CD8-positive, alpha-beta T cell (primary cell): ENCODE measurements at regions of chr4 and their contacts with region 1.

Region 1: GRCh38 chr4:1628892-1629698 is 55.0 kb downstream of the FAM53A start:
- DNase-seq: peak; percentile 51 to 81 (median 69)
- ATAC-seq: peak; percentile 93
- H3K4me3 ChIP-seq: no peak overlapping the region
- H3K4me3 Mint-ChIP-seq: no peak overlapping the region
- H3K27ac ChIP-seq: no peak overlapping the region
- H3K27ac Mint-ChIP-seq: no peak overlapping the region
- H3K4me1 ChIP-seq: no peaks in the 10 kb centered on the region
- H3K4me1 Mint-ChIP-seq: no peaks in the 10 kb centered on the region
- H3K27me3 ChIP-seq: no peaks in the 10 kb centered on the region
- H3K27me3 Mint-ChIP-seq: no peaks in the 10 kb centered on the region
- CTCF ChIP-seq: peak; percentile 95

Region 2: DNA sequence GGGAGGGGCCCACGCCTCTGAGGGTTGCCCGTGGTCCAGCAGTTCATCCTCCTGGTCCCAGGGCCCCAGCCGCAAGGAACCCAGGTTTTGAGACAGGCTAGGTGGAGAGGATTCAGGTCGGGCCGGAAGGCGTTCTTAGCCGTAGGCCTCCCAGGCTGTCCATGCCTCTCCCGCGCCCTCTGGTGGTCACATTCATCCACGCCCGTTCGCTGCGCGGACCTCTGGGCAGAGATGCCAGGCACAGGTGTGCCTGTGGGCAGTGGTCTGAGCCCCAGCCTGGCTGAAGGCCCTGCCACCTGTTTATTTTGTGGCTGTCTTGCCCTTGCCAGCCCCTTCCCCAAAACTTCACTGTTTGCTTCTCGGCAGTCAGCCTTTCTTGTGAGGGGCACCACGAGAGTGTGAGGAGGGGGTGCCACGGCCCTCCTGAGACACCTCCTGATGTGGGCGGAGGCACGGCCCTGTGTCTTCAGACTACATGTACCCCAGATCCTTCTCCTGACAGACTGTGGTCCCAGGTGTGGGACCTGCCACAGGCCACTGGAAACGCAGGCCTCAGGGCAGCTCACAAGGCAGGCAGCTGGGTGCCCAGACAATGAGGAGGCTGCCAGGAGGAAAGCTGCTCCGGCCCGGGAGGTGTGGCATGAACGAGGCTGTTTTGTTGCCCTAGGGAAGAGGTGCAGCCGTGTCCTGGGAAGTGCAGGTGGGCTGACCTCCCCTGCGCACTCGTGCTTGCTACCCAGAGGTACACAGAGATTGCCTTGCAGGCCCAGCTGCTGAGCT is 277.1 kb before region 1 on chr4:
- CTCF ChIA-PET with region 1: interaction called, 91 read pairs
- POLR2A ChIA-PET with region 1: no interaction called
- intact Hi-C with region 1: loop called in 1 of 2 experiments (anchors 1 kb)
- DNase-seq: peak; percentile 78 to 96 (median 90)
- ATAC-seq: peak; percentile 30
- H3K4me3 ChIP-seq: no peak overlapping the region
- H3K4me3 Mint-ChIP-seq: no peak overlapping the region
- H3K27ac ChIP-seq: peak overlapping the region in 1 of 2 experiments; percentile 28
- H3K27ac Mint-ChIP-seq: peak overlapping the region; percentile 72
- H3K4me1 ChIP-seq: peaks cover 21% of the 10 kb centered on the region
- H3K4me1 Mint-ChIP-seq: peaks cover 33% of the 10 kb centered on the region
- H3K27me3 ChIP-seq: no peaks in the 10 kb centered on the region
- H3K27me3 Mint-ChIP-seq: no peaks in the 10 kb centered on the region
- CTCF ChIP-seq: peak; percentile 85

Region 3: DNA sequence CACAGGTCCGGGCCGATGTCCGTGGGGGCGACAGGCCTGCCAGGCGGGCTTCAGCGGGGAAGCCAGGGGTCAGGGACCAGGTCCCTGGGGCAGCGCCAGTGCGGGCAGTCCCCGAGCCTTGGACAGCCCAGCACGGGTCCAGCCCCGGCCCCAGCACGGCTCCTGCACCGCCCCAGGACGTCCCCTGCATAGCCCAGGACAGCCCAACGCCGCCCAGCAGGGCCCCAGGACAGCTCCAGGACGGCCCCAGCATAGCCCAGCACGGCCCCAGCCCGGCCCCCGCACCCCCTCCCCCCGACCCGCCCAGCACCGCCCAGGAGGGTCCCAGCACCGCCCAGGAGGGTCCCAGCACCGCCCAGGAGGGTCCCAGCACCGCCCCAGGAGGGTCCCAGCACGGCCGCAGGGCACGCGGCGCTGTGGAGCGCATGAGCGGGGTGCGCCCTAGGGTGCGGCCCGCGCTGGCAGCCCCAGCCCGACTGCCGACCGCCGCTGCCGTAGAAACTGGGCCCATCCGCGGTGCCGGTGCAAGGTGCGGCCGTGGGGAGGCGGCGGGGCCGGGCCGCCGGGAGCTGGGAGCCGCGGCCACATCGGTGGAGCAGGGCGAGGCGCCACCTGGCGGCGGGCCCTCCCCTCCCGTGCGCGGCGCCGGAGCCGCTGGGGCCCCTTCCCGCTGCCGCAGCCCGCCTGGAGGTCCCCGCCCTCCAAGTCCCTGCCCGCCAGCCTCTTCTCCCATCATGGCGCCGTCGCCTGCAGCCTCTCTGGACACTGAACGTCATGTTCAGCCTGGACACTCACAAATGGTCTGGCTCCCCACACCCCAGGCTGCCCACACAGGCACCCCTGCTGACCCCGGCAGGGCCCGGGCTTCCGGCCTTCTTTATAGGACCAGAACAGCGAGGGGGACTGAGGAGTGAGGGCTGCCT is 116.1 kb before region 1 on chr4:
- CTCF ChIA-PET with region 1: interaction called, 8 read pairs
- POLR2A ChIA-PET with region 1: no interaction called
- intact Hi-C with region 1: loop called in 1 of 2 experiments (anchors 1 kb)
- DNase-seq: peak in 8 of 9 experiments; percentile 9 to 67 (median 40)
- ATAC-seq: peak; percentile 52
- H3K4me3 ChIP-seq: no peak overlapping the region
- H3K4me3 Mint-ChIP-seq: no peak overlapping the region
- H3K27ac ChIP-seq: no peak overlapping the region
- H3K27ac Mint-ChIP-seq: no peak overlapping the region
- H3K4me1 ChIP-seq: peaks cover 4% of the 10 kb centered on the region
- H3K4me1 Mint-ChIP-seq: no peaks in the 10 kb centered on the region
- H3K27me3 ChIP-seq: peaks cover 5 to 7% of the 10 kb centered on the region in 2 experiments
- H3K27me3 Mint-ChIP-seq: peaks cover 11% of the 10 kb centered on the region
- CTCF ChIP-seq: peak; percentile 65

Region 4: DNA sequence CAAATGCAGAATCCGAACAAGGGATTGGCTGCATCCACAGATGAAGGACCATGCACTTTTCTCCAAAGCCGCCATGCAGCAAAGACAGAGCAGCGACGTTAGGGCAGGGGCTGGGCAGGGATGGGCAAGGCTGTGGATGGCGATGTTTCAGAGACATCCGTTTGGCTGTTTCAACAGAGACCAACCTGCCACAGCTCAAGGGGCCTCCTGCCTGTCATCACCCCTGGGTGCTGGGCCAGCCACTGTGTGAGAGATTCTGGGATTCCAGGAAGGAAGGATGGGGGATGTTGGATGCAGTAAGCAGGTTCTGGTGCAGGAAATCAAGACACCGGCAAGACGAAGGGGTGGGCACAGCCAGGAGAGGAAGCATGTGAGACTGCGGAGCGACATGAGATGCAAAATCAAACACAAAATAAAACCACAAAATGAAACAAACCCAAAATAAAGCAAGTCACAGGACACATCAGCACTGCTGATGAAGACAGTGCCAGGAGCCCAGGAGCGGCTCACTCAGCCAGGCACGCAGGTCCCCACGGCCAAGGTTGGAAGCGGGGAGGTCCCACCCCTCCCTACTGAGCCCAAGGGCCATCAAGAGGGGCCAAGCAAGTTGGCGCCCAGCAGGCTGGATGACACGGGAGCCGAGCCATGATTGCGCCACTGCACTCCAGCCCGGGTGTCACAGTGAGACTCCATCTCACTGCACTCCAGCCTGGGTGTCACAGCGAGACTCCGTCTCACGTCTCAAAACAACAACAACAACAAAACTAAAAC is 13.1 kb before region 1 on chr4:
- CTCF ChIA-PET with region 1: interaction called, 10 read pairs
- POLR2A ChIA-PET with region 1: no interaction called
- intact Hi-C with region 1: no loop called
- DNase-seq: peak in 2 of 9 experiments; percentile 34 to 51
- ATAC-seq: peak; percentile 72
- H3K4me3 ChIP-seq: no peak overlapping the region
- H3K4me3 Mint-ChIP-seq: peak overlapping the region; percentile 55
- H3K27ac ChIP-seq: no peak overlapping the region
- H3K27ac Mint-ChIP-seq: peak overlapping the region; percentile 88
- H3K4me1 ChIP-seq: peaks cover 20% of the 10 kb centered on the region
- H3K4me1 Mint-ChIP-seq: peaks cover 39% of the 10 kb centered on the region
- H3K27me3 ChIP-seq: no peaks in the 10 kb centered on the region
- H3K27me3 Mint-ChIP-seq: no peaks in the 10 kb centered on the region
- CTCF ChIP-seq: no peak

Region 5: GRCh38 chr4:1660948-1661677 is 32.0 kb after region 1 on chr4:
- CTCF ChIA-PET with region 1: no interaction called
- POLR2A ChIA-PET with region 1: no interaction called
- intact Hi-C with region 1: no loop called
- DNase-seq: no peak
- ATAC-seq: no peak
- H3K4me3 ChIP-seq: no peak overlapping the region
- H3K4me3 Mint-ChIP-seq: no peak overlapping the region
- H3K27ac ChIP-seq: no peak overlapping the region
- H3K27ac Mint-ChIP-seq: no peak overlapping the region
- H3K4me1 ChIP-seq: no peaks in the 10 kb centered on the region
- H3K4me1 Mint-ChIP-seq: no peaks in the 10 kb centered on the region
- H3K27me3 ChIP-seq: no peaks in the 10 kb centered on the region
- H3K27me3 Mint-ChIP-seq: no peaks in the 10 kb centered on the region
- CTCF ChIP-seq: no peak

Region 6: GRCh38 chr4:1870578-1871443 is 241.7 kb after region 1 on chr4 and contains the start of gene NSD2:
- CTCF ChIA-PET with region 1: no interaction called
- POLR2A ChIA-PET with region 1: no interaction called
- intact Hi-C with region 1: no loop called
- DNase-seq: peak; percentile 81 to 97 (median 88)
- ATAC-seq: peak; percentile 64
- H3K4me3 ChIP-seq: peak within 1 kb of the TSS; percentile 66 to 98
- H3K4me3 Mint-ChIP-seq: peak within 1 kb of the TSS; percentile 83
- H3K27ac ChIP-seq: peak within 1 kb of the TSS; percentile 81 to 98
- H3K27ac Mint-ChIP-seq: peak within 1 kb of the TSS; percentile 89
- H3K4me1 ChIP-seq: peaks cover 21% of the 10 kb centered on the region
- H3K4me1 Mint-ChIP-seq: peaks cover 31% of the 10 kb centered on the region
- H3K27me3 ChIP-seq: no peaks in the 10 kb centered on the region
- H3K27me3 Mint-ChIP-seq: no peaks in the 10 kb centered on the region
- CTCF ChIP-seq: no peak
- total RNA-seq, gene NSD2: 27.3 to 32.5 TPM